ENCODE measurements at regions of chr20 and their contacts with region 1.

Region 1: GRCh38 chr20:17968366-17969279 is at the starts of genes MGME1 and SNX5:
- DNase-seq: peak; percentile 95 to 100
- H3K4me3 ChIP-seq: peak within 1 kb of the TSS; percentile 96
- H3K27ac ChIP-seq: peak within 1 kb of the TSS; percentile 95
- H3K4me1 ChIP-seq: peaks cover 70% of the 10 kb centered on the region
- H3K27me3 ChIP-seq: no peaks in the 10 kb centered on the region
- CTCF ChIP-seq: no peak
- total RNA-seq, gene MGME1: 31.3 and 42.8 TPM in 2 replicates
- total RNA-seq, gene SNX5: 97.7 and 116 TPM in 2 replicates

Region 2: DNA sequence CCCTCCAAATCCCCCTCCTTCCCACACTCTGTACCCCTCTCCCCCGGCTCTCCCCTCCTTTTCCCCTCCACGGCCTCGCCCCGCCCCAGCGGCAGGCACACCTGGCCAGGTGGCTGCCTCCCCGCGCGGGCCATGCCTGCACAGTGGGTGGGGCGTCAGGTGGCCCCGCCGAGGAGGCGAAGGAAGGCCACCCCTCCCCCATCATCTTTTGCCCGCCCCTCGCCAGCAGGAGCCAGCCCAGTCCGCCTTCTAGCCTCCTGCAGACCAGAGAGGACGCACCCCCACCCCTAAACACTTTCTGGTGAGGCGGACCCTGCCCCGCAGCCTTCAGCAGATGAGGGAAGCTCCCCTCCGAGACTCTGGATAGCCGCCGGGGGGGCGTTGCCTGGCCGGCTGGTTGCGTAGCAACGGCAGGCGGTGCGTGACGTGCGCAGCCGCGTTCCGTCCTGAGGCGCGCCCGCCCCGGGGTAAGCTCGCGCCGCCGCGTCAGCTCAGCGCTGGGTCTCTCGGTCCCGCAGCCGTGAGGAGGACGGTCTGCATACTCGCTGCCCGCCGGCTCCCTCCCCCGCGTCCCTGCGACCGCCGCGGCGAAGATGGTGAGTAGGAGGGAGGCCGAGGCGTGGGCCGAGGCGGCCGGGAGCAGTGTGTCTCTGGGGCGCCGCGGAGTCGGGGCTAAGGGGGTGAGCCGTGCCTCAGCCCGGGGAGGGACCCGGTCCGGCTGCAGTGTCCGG is 398.8 kb before region 1 on chr20 and contains the start of gene DSTN:
- CTCF ChIA-PET with region 1: interaction called, 4 read pairs
- POLR2A ChIA-PET with region 1: interaction called, 3 read pairs
- intact Hi-C with region 1: loop called (anchors 2 kb)
- DNase-seq: peak; percentile 91 to 97
- H3K4me3 ChIP-seq: peak within 1 kb of the TSS; percentile 95
- H3K27ac ChIP-seq: peak within 1 kb of the TSS; percentile 84
- H3K4me1 ChIP-seq: peaks cover 54% of the 10 kb centered on the region
- H3K27me3 ChIP-seq: no peaks in the 10 kb centered on the region
- CTCF ChIP-seq: no peak
- total RNA-seq, gene DSTN: 296 and 366 TPM in 2 replicates

Region 3: GRCh38 chr20:17985388-17986018 is 16.9 kb after region 1 on chr20:
- CTCF ChIA-PET with region 1: no interaction called
- POLR2A ChIA-PET with region 1: interaction called, 15 read pairs
- intact Hi-C with region 1: no loop called
- DNase-seq: no peak
- H3K4me3 ChIP-seq: no peak overlapping the region
- H3K27ac ChIP-seq: no peak overlapping the region
- H3K4me1 ChIP-seq: no peaks in the 10 kb centered on the region
- H3K27me3 ChIP-seq: no peaks in the 10 kb centered on the region
- CTCF ChIP-seq: no peak

Region 4: GRCh38 chr20:18252597-18253451 is 284.2 kb after region 1 on chr20:
- CTCF ChIA-PET with region 1: no interaction called
- POLR2A ChIA-PET with region 1: no interaction called
- intact Hi-C with region 1: loop called (anchors 1 kb)
- DNase-seq: peak; percentile 95 to 100
- H3K4me3 ChIP-seq: peak overlapping the region; percentile 34; the same call in 1 of the 2 replicates
- H3K27ac ChIP-seq: peak overlapping the region; percentile 96
- H3K4me1 ChIP-seq: peaks cover 40% of the 10 kb centered on the region
- H3K27me3 ChIP-seq: no peaks in the 10 kb centered on the region
- CTCF ChIP-seq: no peak

Region 5: GRCh38 chr20:18331694-18332093 is 363.1 kb after region 1 on chr20:
- CTCF ChIA-PET with region 1: no interaction called
- POLR2A ChIA-PET with region 1: interaction called, 10 read pairs
- intact Hi-C with region 1: no loop called
- DNase-seq: no peak
- H3K4me3 ChIP-seq: no peak overlapping the region
- H3K27ac ChIP-seq: no peak overlapping the region
- H3K4me1 ChIP-seq: peaks cover 12% of the 10 kb centered on the region
- H3K27me3 ChIP-seq: no peaks in the 10 kb centered on the region
- CTCF ChIP-seq: no peak

Region 6: DNA sequence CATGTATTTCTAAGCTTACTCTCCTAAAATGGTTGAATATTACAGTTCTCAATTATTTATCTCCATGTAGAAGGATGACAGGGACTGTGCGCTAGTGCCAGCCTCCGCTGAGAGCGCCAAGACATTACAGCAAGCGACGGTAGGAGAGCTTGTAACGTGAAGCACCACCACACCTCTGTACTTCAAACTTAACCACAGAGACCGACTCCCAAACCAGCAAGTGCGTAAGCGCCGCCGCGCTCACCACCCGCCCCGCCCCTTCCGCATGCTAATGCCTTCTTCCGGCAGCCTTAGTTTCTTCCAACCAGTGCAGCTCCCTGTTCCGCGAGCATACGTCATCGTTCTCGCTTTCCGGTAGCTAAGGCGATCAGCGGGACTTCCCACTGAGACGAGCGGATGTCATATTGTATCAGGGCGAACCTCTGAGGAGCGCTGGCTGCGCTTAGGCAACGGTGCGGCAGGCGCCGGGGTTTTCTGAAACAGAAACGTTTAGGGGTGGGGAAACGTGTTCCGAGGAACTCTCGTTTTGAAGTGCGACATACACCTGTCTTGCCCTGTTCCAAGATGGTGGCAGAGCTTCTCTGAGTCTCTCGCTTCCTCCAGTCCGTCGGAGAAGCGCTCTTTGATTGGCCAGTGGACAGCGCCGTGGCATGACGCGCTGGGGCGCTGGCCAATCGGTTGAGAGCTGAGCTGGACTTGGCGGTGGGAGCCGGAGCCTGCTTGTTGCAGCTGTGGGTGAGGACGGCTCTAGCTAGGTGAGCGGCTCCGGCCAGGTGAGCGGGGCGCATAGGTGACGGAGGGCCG is 538.8 kb after region 1 on chr20 and contains the start of gene SEC23B:
- CTCF ChIA-PET with region 1: no interaction called
- POLR2A ChIA-PET with region 1: no interaction called
- intact Hi-C with region 1: loop called (anchors 5 kb)
- DNase-seq: peak; percentile 97 to 98
- H3K4me3 ChIP-seq: peak within 1 kb of the TSS; percentile 61
- H3K27ac ChIP-seq: peak within 1 kb of the TSS; percentile 92
- H3K4me1 ChIP-seq: peaks cover 18% of the 10 kb centered on the region
- H3K27me3 ChIP-seq: no peaks in the 10 kb centered on the region
- CTCF ChIP-seq: no peak
- total RNA-seq, gene SEC23B: 60.3 and 78.5 TPM in 2 replicates

Measured in PC-9 (cell line).